GM12878 (cell line): ENCODE measurements at regions of chr2 and their contacts with region 1.

Region 1: GRCh38 chr2:165440367-165440766 is 29.1 kb upstream of the CSRNP3 start:
- DNase-seq: no peak
- ATAC-seq: no peak
- H3K4me3 ChIP-seq: no peak overlapping the region
- H3K27ac ChIP-seq: no peak overlapping the region
- H3K4me1 ChIP-seq: no peaks in the 10 kb centered on the region
- H3K27me3 ChIP-seq: no peaks in the 10 kb centered on the region
- CTCF ChIP-seq: no peak
- EP300 ChIP-seq: no peak
- POLR2A ChIP-seq: no peak
- RAD21 ChIP-seq: no peak

Region 2: GRCh38 chr2:165401285-165401852 is 39.0 kb before region 1 on chr2:
- CTCF ChIA-PET with region 1: interaction called, 10 read pairs
- POLR2A ChIA-PET with region 1: no interaction called
- RAD21 ChIA-PET with region 1: interaction called, 4 read pairs
- SMC1A ChIA-PET with region 1: interaction called, 36 read pairs
- in situ Hi-C with region 1: no loop called
- intact Hi-C with region 1: no loop called
- DNase-seq: peak; percentile 9
- ATAC-seq: peak; percentile 77
- H3K4me3 ChIP-seq: no peak overlapping the region
- H3K27ac ChIP-seq: no peak overlapping the region
- H3K4me1 ChIP-seq: no peaks in the 10 kb centered on the region
- H3K27me3 ChIP-seq: no peaks in the 10 kb centered on the region
- CTCF ChIP-seq: peak; percentile 54 to 69 (median 66); a peak in 5 of 6 replicates
- EP300 ChIP-seq: no peak
- POLR2A ChIP-seq: no peak
- RAD21 ChIP-seq: peak; percentile 81

Region 3: GRCh38 chr2:165425556-165425955 is 14.8 kb before region 1 on chr2:
- CTCF ChIA-PET with region 1: interaction called, 7 read pairs
- POLR2A ChIA-PET with region 1: interaction called, 4 read pairs
- RAD21 ChIA-PET with region 1: interaction called, 6 read pairs
- SMC1A ChIA-PET with region 1: interaction called, 19 read pairs
- in situ Hi-C with region 1: no loop called
- intact Hi-C with region 1: no loop called
- DNase-seq: no peak
- ATAC-seq: no peak
- H3K4me3 ChIP-seq: no peak overlapping the region
- H3K27ac ChIP-seq: no peak overlapping the region
- H3K4me1 ChIP-seq: no peaks in the 10 kb centered on the region
- H3K27me3 ChIP-seq: no peaks in the 10 kb centered on the region
- CTCF ChIP-seq: no peak
- EP300 ChIP-seq: no peak
- POLR2A ChIP-seq: no peak
- RAD21 ChIP-seq: no peak

Region 4: DNA sequence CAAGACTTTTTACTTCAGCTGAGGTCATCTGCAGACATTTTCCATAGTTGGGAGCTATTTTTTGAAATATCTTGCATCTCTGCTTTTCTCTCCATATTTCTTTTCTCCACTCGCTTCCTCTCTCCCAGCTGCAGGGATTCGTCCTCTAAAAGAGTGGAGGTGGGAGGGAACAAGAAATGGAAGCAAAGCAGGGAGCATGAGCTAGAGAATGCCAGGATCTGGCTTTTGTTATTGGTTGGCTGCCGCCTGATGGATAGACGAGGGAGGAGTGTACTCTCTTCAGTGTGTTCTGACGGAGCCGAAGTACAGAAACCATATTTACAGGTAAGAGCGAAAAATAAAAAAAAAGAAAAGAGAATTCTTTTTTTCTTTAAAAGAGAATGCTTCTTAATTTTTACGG is 29.1 kb after region 1 on chr2 and contains the start of gene CSRNP3:
- CTCF ChIA-PET with region 1: interaction called, 8 read pairs
- POLR2A ChIA-PET with region 1: no interaction called
- RAD21 ChIA-PET with region 1: interaction called, 5 read pairs
- SMC1A ChIA-PET with region 1: interaction called, 21 read pairs
- in situ Hi-C with region 1: no loop called
- intact Hi-C with region 1: no loop called
- DNase-seq: no peak
- ATAC-seq: peak; percentile 45; the same call in 2 of the 3 replicates
- H3K4me3 ChIP-seq: no peak within 1 kb of the TSS
- H3K27ac ChIP-seq: no peak within 1 kb of the TSS
- H3K4me1 ChIP-seq: no peaks in the 10 kb centered on the region
- H3K27me3 ChIP-seq: no peaks in the 10 kb centered on the region
- CTCF ChIP-seq: no peak
- EP300 ChIP-seq: no peak
- POLR2A ChIP-seq: no peak
- RAD21 ChIP-seq: no peak
- polyA plus RNA-seq, gene CSRNP3: 0.11 TPM in 1 of 2 experiments, not detected in the other

Region 5: DNA sequence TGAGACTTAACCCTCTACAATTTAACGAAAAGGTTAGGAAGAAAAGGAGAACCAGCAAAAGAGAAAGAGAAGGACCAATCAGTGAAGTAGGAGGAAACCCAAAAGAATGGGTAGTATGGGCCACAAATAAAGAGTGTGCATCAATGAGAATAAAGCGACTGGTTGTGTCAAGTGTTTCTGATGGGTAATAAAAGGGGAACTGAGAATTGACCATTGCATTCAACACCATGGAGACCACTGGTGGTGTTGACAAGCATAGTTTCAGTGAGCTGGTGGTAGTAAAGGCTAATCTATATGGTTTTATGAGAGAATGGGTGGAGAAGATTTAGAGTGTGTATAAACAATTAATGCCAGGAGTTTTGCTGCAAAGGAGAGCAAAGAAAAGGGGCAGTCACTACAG is 104.5 kb after region 1 on chr2:
- CTCF ChIA-PET with region 1: interaction called, 4 read pairs
- POLR2A ChIA-PET with region 1: interaction called, 8 read pairs
- RAD21 ChIA-PET with region 1: no interaction called
- SMC1A ChIA-PET with region 1: interaction called, 21 read pairs
- in situ Hi-C with region 1: no loop called
- intact Hi-C with region 1: no loop called
- DNase-seq: no peak
- ATAC-seq: peak; percentile 99
- H3K4me3 ChIP-seq: no peak overlapping the region
- H3K27ac ChIP-seq: no peak overlapping the region
- H3K4me1 ChIP-seq: no peaks in the 10 kb centered on the region
- H3K27me3 ChIP-seq: no peaks in the 10 kb centered on the region
- CTCF ChIP-seq: no peak
- EP300 ChIP-seq: peak; percentile 8 to 70; a peak in 1 of 4 replicates
- POLR2A ChIP-seq: no peak
- RAD21 ChIP-seq: no peak

Region 6: DNA sequence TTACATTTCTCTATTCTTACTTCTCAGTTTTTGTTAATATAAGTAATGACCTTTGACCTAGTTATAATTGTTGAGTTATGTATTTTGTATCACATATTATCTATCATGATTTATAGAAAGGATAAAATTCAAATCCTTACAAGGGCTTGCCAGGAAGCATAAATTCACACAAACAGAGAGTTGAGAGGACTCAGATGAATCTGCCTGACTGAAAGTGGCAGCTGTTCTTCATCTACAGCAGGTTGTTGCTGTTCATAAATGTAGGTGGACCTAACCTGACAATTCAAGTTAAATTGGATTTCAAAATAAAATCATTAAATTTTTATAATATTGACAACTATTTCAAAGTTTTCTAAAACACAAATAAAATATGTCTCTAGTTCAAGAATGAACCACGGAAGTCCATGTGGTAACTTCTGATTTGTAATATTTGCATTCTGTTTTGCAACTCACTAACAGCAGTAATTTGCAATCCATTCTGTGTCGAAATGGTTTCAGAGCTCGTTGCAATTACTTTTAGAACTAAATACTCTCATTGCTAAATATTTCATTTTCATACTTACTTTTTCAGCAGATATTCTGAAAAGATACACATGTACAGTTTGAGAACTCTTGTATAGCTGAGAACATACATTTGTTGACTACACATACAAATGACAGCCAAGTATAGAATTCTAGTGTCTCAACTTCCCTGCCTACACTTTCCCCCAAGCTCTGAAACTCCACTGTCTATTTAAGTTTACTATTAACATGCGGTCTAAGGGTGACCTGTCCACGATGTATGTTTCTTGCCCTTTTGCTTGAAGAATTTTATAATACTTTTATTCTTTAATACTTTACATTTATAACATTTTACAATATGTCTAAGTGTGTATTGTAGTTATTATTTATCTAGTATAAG is 1028.0 kb after region 1 on chr2:
- CTCF ChIA-PET with region 1: no interaction called
- POLR2A ChIA-PET with region 1: no interaction called
- RAD21 ChIA-PET with region 1: no interaction called
- SMC1A ChIA-PET with region 1: no interaction called
- in situ Hi-C with region 1: no loop called
- intact Hi-C with region 1: no loop called
- DNase-seq: no peak
- ATAC-seq: no peak
- H3K4me3 ChIP-seq: no peak overlapping the region
- H3K27ac ChIP-seq: no peak overlapping the region
- H3K4me1 ChIP-seq: no peaks in the 10 kb centered on the region
- H3K27me3 ChIP-seq: no peaks in the 10 kb centered on the region
- CTCF ChIP-seq: no peak
- EP300 ChIP-seq: no peak
- POLR2A ChIP-seq: no peak
- RAD21 ChIP-seq: no peak